MCF 10A (cell line): ENCODE measurements at regions of chr12 and their contacts with region 1.

Region 1: DNA sequence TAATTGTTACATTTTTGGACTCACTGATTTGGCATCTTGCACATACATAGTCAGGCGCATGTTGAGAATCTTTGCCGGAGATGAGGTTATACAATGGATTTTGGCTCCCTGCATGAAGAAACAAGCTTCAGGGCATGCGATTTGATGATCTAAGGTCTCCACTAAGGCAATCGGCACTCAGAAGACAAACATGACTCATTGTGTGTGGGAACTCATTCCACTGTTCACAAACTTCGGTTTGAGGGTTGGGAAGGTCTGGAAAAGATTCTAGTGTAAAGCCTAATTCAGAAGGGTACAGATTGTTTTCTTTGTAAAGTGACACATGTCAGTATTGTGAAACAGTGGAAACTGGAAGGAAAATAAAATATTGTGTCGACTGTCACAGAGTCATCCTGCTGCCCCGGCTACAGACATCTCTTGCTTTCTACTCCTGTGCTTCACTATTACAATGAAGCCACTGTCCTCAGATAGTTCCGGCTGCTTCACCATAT is 192.6 kb upstream of the HMGA2 start:
- DNase-seq: peak; percentile 100
- H3K4me3 Mint-ChIP-seq: peak overlapping the region; percentile 11
- H3K27ac Mint-ChIP-seq: peak overlapping the region; percentile 86
- H3K4me1 Mint-ChIP-seq: peaks cover 63% of the 10 kb centered on the region
- H3K27me3 Mint-ChIP-seq: no peaks in the 10 kb centered on the region
- CTCF ChIP-seq: no peak

Region 2: DNA sequence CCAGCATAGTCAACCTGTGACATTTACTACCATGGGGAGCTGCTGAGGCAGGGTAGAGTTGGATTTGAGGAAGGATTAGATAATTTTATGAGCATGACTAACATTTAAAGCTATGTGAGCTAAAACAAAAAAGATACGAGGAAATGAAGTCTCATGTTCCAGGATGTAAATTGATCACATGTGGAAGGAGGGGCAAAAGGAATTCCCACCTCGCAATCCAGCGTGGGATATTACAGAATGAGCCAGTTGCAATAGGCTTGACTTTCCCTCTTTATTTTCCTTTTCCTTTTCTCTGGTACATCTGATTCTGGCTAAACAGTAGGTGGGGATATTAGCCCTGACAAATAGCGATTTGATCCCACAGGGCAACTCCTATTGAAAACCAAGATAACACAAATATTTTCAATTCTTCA is 22.3 kb before region 1 on chr12:
- CTCF ChIA-PET with region 1: interaction called, 10 read pairs
- POLR2A ChIA-PET with region 1: interaction called, 26 read pairs
- intact Hi-C with region 1: no loop called
- DNase-seq: peak; percentile 82
- H3K4me3 Mint-ChIP-seq: no peak overlapping the region
- H3K27ac Mint-ChIP-seq: peak overlapping the region; percentile 68
- H3K4me1 Mint-ChIP-seq: peaks cover 32% of the 10 kb centered on the region
- H3K27me3 Mint-ChIP-seq: no peaks in the 10 kb centered on the region
- CTCF ChIP-seq: no peak

Region 3: GRCh38 chr12:65649126-65649525 is 17.5 kb after region 1 on chr12:
- CTCF ChIA-PET with region 1: interaction called, 3 read pairs
- POLR2A ChIA-PET with region 1: interaction called, 28 read pairs
- intact Hi-C with region 1: no loop called
- DNase-seq: peak; percentile 98
- H3K4me3 Mint-ChIP-seq: peak overlapping the region; percentile 41
- H3K27ac Mint-ChIP-seq: peak overlapping the region; percentile 92
- H3K4me1 Mint-ChIP-seq: peaks cover 26% of the 10 kb centered on the region
- H3K27me3 Mint-ChIP-seq: no peaks in the 10 kb centered on the region
- CTCF ChIP-seq: no peak

Region 4: GRCh38 chr12:65656904-65657351 is 25.3 kb after region 1 on chr12:
- CTCF ChIA-PET with region 1: no interaction called
- POLR2A ChIA-PET with region 1: interaction called, 9 read pairs
- intact Hi-C with region 1: loop called (anchors 1 kb)
- DNase-seq: peak; percentile 96
- H3K4me3 Mint-ChIP-seq: no peak overlapping the region
- H3K27ac Mint-ChIP-seq: peak overlapping the region; percentile 94
- H3K4me1 Mint-ChIP-seq: peaks cover 61% of the 10 kb centered on the region
- H3K27me3 Mint-ChIP-seq: no peaks in the 10 kb centered on the region
- CTCF ChIP-seq: no peak

Region 5: DNA sequence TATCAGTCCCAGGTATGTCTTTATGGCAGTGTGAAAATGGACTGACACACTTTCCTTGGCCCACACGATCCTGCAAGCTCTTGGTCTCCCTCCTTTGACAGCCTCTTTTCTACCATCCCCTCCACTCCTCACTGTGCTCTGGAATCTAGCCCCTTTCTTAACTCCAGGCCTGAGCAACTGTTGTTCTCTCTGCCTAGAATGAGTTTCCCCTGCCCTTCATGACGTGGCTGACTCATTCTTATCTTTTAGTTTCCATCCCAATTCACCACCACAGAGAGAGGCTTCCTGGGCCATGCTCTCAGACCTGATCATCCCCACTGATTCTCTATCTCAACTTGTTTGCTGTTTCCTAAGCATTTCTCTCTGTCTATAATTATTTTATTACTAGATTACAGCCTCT is 35.2 kb after region 1 on chr12:
- CTCF ChIA-PET with region 1: no interaction called
- POLR2A ChIA-PET with region 1: interaction called, 4 read pairs
- intact Hi-C with region 1: loop called (anchors 1 kb)
- DNase-seq: no peak
- H3K4me3 Mint-ChIP-seq: no peak overlapping the region
- H3K27ac Mint-ChIP-seq: peak overlapping the region; percentile 71
- H3K4me1 Mint-ChIP-seq: peaks cover 44% of the 10 kb centered on the region
- H3K27me3 Mint-ChIP-seq: no peaks in the 10 kb centered on the region
- CTCF ChIP-seq: no peak